ENCODE measurements at regions of chr17 and their contacts with region 1.

Region 1: DNA sequence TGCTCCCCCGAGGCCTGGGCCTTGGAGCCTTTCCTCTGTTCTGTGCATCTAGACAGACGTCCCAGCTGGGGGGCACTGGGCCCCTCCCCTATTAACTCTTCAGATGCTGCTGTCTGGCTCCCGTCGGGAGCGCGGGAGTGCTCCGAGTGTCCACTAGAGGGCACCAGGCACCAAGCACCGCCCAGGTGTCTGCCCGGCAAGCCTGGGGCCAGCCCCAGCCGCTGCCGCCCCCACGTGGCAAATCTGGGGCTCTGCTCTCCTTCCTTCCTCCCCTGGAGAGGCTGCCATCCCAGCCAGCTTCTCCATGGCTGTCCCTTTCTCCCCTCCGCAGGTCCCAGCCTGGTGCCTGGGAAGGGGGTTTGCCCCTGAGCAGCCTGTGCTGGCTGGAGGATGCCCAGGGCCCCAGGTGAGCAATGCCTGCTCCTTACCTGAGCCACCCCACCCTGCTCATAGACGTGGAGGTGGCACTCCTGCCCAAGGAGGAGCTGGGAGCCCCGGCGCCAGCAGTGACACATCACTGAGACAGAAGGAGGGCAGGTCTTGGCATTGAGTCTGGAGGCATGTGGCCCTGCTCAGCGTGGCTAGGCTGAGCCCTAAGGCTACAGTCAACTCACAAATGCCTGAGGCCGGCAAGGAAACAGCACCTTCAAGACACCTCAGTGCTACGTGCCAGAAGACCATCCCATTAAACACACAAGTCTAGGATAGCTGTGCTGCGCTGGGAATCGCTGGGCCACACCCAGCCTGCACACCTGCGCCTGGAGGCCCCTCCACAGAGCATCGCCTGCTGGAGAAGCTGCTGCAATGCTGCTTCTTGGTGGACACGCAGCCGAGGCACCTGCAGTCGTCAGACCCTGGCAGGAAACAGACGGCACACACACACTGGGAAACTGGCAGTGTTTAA is 19.7 kb downstream of the TMEM235 start:
- DNase-seq: peak; percentile 55
- ATAC-seq: peak; percentile 90
- H3K4me3 ChIP-seq: peak overlapping the region in 1 of 2 experiments; percentile 21; a peak in 1 of 4 replicates
- H3K27ac ChIP-seq: peak overlapping the region; percentile 18; the same call in 1 of the 2 replicates
- H3K4me1 ChIP-seq: peaks cover 14% of the 10 kb centered on the region
- H3K27me3 ChIP-seq: no peaks in the 10 kb centered on the region
- CTCF ChIP-seq: peak; percentile 100

Region 2: GRCh38 chr17:78019367-78019975 is 231.7 kb before region 1 on chr17:
- CTCF ChIA-PET with region 1: interaction called, 10 read pairs
- POLR2A ChIA-PET with region 1: no interaction called
- in situ Hi-C with region 1: no loop called
- intact Hi-C with region 1: no loop called
- DNase-seq: no peak
- ATAC-seq: peak; percentile 73
- H3K4me3 ChIP-seq: no peak overlapping the region
- H3K27ac ChIP-seq: no peak overlapping the region
- H3K4me1 ChIP-seq: no peaks in the 10 kb centered on the region
- H3K27me3 ChIP-seq: no peaks in the 10 kb centered on the region
- CTCF ChIP-seq: peak; percentile 71; the same call in 1 of the 2 replicates

Region 3: DNA sequence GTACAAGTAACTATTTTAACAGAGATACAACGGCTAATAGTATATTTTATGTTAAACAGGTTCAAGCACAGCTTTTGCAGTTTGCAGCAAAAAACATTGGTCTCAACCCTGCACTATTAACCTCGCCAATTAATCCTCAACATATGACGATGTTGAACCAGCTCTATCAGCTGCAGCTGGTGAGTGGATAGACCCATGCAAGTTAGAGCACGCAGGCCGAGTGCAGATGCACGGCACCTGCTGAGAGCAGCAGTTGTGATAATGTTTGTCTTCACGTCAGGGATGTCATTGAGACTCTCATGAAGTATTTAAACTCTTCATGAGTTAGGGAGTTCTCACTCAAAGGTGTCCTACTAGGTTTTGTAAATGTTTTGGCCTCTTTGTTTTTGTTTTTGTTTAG is 168.2 kb before region 1 on chr17:
- CTCF ChIA-PET with region 1: interaction called, 12 read pairs
- POLR2A ChIA-PET with region 1: no interaction called
- in situ Hi-C with region 1: no loop called
- intact Hi-C with region 1: no loop called
- DNase-seq: no peak
- ATAC-seq: no peak
- H3K4me3 ChIP-seq: no peak overlapping the region
- H3K27ac ChIP-seq: no peak overlapping the region
- H3K4me1 ChIP-seq: no peaks in the 10 kb centered on the region
- H3K27me3 ChIP-seq: no peaks in the 10 kb centered on the region
- CTCF ChIP-seq: no peak

Region 4: DNA sequence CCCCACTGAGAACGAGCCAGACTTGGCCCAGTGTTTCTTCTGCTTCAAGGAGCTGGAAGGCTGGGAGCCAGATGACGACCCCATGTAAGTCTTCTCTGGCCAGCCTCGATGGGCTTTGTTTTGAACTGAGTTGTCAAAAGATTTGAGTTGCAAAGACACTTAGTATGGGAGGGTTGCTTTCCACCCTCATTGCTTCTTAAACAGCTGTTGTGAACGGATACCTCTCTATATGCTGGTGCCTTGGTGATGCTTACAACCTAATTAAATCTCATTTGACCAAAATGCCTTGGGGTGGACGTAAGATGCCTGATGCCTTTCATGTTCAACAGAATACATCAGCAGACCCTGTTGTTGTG is 36.5 kb before region 1 on chr17:
- CTCF ChIA-PET with region 1: no interaction called
- POLR2A ChIA-PET with region 1: no interaction called
- in situ Hi-C with region 1: no loop called
- intact Hi-C with region 1: no loop called
- DNase-seq: no peak
- ATAC-seq: peak; percentile 1; the same call in 1 of the 2 replicates
- H3K4me3 ChIP-seq: peak overlapping the region; percentile 58 to 74
- H3K27ac ChIP-seq: peak overlapping the region; percentile 93
- H3K4me1 ChIP-seq: 0 out of 2 replicates have a peak, but pooled peaks cover 5% of the 10 kb centered on the region
- H3K27me3 ChIP-seq: no peaks in the 10 kb centered on the region
- CTCF ChIP-seq: no peak

Region 5: GRCh38 chr17:78421484-78422266 is 170.5 kb after region 1 on chr17:
- CTCF ChIA-PET with region 1: interaction called, 9 read pairs
- POLR2A ChIA-PET with region 1: no interaction called
- in situ Hi-C with region 1: no loop called
- intact Hi-C with region 1: loop called (anchors 5 kb)
- DNase-seq: peak; percentile 51
- ATAC-seq: peak; percentile 88
- H3K4me3 ChIP-seq: no peak overlapping the region
- H3K27ac ChIP-seq: peak overlapping the region; percentile 6; the same call in 1 of the 2 replicates
- H3K4me1 ChIP-seq: peaks cover 12% of the 10 kb centered on the region; the same call in 1 of the 2 replicates
- H3K27me3 ChIP-seq: no peaks in the 10 kb centered on the region
- CTCF ChIP-seq: peak; percentile 99

Region 6: GRCh38 chr17:78442648-78443128 is 191.5 kb after region 1 on chr17:
- CTCF ChIA-PET with region 1: interaction called, 10 read pairs
- POLR2A ChIA-PET with region 1: no interaction called
- in situ Hi-C with region 1: no loop called
- intact Hi-C with region 1: no loop called
- DNase-seq: no peak
- ATAC-seq: no peak
- H3K4me3 ChIP-seq: no peak overlapping the region
- H3K27ac ChIP-seq: no peak overlapping the region
- H3K4me1 ChIP-seq: no peaks in the 10 kb centered on the region
- H3K27me3 ChIP-seq: no peaks in the 10 kb centered on the region
- CTCF ChIP-seq: no peak

Measured in Panc1 (cell line).